B cell (primary cell): ENCODE measurements at regions of chr2 and their contacts with region 1.

Region 1: GRCh38 chr2:231394211-231395141 is 1.0 kb upstream of the B3GNT7 start:
- DNase-seq: peak; percentile 88
- ATAC-seq: peak; percentile 40
- H3K4me3 ChIP-seq: peak overlapping the region; percentile 48 to 85 (median 66)
- H3K4me3 Mint-ChIP-seq: peak overlapping the region; percentile 99
- H3K27ac ChIP-seq: peak overlapping the region; percentile 97
- H3K27ac Mint-ChIP-seq: peak overlapping the region; percentile 100
- H3K4me1 ChIP-seq: peaks cover 47 to 65% of the 10 kb centered on the region in 2 donors
- H3K4me1 Mint-ChIP-seq: peaks cover 64% of the 10 kb centered on the region
- H3K27me3 ChIP-seq: no peaks in the 10 kb centered on the region
- H3K27me3 Mint-ChIP-seq: no peaks in the 10 kb centered on the region
- CTCF ChIP-seq: peak; percentile 60

Region 2: DNA sequence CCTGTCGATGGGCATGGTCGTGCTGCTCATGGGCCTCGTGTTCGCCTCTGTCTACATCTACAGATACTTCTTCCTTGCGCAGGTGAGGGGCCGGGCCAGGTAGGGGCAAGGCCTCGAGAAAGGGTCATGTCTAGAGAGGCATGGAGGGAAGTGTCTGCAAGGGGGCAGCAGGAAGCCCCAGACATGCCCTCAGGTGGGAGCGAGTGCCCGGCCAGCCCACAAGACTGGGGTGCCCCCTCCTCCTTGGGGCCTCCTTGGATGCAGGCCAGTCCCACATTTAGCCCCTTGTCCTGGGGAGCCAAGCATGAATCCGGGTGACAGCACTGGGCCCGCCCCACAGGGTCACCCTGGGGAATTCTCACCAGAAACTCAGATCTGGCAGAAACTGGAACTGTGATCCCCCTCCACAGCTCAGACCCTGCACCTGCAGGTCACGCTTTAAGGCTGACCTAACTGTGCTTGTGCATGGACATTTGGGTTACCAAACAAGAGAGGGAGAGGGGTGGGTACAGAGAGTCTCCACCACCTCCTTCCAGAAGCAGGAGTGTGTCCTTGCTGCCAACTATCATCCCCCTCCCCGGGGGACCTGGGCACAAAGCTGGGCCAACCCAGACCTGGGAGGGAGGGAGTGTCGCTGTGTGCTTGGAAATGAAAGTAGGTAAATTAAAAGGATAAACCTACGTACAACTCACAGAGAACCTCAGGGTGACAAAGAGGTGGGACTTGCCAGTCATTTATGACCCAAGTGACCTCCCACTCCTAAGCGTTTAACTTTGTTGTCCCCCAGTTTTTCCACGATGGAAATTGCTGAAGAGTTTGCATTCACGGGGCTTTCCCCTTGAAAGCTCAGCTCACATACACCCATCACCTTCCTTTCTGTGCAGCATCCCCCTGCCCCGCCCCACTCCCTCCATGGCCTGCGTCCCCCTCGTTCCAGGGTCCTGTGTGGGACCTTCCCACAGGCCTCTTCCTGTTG is 520.7 kb before region 1 on chr2:
- CTCF ChIA-PET with region 1: no interaction called
- POLR2A ChIA-PET with region 1: no interaction called
- intact Hi-C with region 1: loop called (anchors 10 kb)
- DNase-seq: peak; percentile 88
- ATAC-seq: peak; percentile 77
- H3K4me3 ChIP-seq: peak overlapping the region in 4 of 5 experiments; percentile 33 to 57 (median 40)
- H3K4me3 Mint-ChIP-seq: peak overlapping the region; percentile 80
- H3K27ac ChIP-seq: peak overlapping the region; percentile 90 to 99
- H3K27ac Mint-ChIP-seq: peak overlapping the region; percentile 87
- H3K4me1 ChIP-seq: peaks cover 92 to 95% of the 10 kb centered on the region in 2 donors
- H3K4me1 Mint-ChIP-seq: peaks cover 72% of the 10 kb centered on the region
- H3K27me3 ChIP-seq: no peaks in the 10 kb centered on the region
- H3K27me3 Mint-ChIP-seq: no peaks in the 10 kb centered on the region
- CTCF ChIP-seq: no peak

Region 3: GRCh38 chr2:231245253-231246094 is 149.0 kb before region 1 on chr2:
- CTCF ChIA-PET with region 1: interaction called, 13 read pairs
- POLR2A ChIA-PET with region 1: no interaction called
- intact Hi-C with region 1: no loop called
- DNase-seq: peak; percentile 61
- ATAC-seq: peak; percentile 68
- H3K4me3 ChIP-seq: no peak overlapping the region
- H3K4me3 Mint-ChIP-seq: no peak overlapping the region
- H3K27ac ChIP-seq: no peak overlapping the region
- H3K27ac Mint-ChIP-seq: no peak overlapping the region
- H3K4me1 ChIP-seq: no peaks in the 10 kb centered on the region
- H3K4me1 Mint-ChIP-seq: no peaks in the 10 kb centered on the region
- H3K27me3 ChIP-seq: no peaks in the 10 kb centered on the region
- H3K27me3 Mint-ChIP-seq: no peaks in the 10 kb centered on the region
- CTCF ChIP-seq: peak; percentile 54

Region 4: GRCh38 chr2:231312066-231312465 is 82.4 kb before region 1 on chr2:
- CTCF ChIA-PET with region 1: interaction called, 10 read pairs
- POLR2A ChIA-PET with region 1: no interaction called
- intact Hi-C with region 1: no loop called
- DNase-seq: no peak
- ATAC-seq: no peak
- H3K4me3 ChIP-seq: no peak overlapping the region
- H3K4me3 Mint-ChIP-seq: no peak overlapping the region
- H3K27ac ChIP-seq: peak overlapping the region in 1 of 2 donors; percentile 16
- H3K27ac Mint-ChIP-seq: no peak overlapping the region
- H3K4me1 ChIP-seq: peaks cover 31 to 42% of the 10 kb centered on the region in 2 donors
- H3K4me1 Mint-ChIP-seq: peaks cover 48% of the 10 kb centered on the region
- H3K27me3 ChIP-seq: no peaks in the 10 kb centered on the region
- H3K27me3 Mint-ChIP-seq: no peaks in the 10 kb centered on the region
- CTCF ChIP-seq: no peak

Region 5: DNA sequence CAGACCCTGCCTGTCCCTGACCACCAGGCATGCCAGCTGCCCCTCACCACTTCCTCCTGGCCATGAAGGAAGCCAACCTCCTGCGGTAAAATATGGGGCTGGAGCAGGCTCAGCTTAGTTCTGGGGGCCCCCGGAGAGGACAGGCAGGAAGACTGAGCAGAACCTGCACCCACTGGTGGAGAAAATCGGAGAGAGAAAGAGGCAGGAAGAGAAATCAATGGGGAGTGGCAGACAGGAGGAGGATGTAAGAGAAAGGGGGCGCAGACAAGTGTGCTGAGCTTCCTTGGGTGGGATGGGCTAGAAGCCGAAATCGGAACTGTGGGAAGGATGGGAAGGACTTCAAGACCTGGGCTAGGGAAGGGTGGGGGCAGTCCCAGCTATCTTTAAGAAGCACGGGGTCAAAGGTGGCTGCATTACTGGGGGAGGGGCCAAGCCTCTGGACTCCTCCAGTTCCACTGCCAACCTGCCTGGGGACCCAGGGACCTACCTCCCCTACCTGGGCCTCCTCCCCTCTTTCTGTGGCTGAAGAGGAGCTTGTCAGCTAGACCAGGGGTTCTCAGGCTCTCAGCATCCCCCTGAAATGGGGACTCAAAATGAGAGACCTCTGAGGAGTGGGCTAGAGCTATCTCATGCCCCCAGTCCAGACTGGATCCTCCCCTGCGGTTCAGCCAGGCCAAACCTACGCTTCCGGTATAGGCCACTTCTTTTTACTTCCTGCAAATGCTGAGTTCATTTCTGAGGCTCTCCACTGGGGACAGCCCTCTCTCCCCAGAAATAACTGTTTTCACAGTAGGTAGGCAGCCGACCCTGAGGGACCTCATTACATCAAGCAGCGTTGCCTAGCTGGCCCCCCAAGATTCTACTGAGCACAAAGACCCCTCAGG is 32.6 kb before region 1 on chr2:
- CTCF ChIA-PET with region 1: interaction called, 3 read pairs
- POLR2A ChIA-PET with region 1: interaction called, 9 read pairs
- intact Hi-C with region 1: loop called (anchors 1 kb)
- DNase-seq: peak; percentile 61
- ATAC-seq: peak; percentile 87
- H3K4me3 ChIP-seq: no peak overlapping the region
- H3K4me3 Mint-ChIP-seq: peak overlapping the region; percentile 32
- H3K27ac ChIP-seq: peak overlapping the region in 1 of 2 donors; percentile 38
- H3K27ac Mint-ChIP-seq: peak overlapping the region; percentile 69
- H3K4me1 ChIP-seq: peaks cover 17 to 23% of the 10 kb centered on the region in 2 donors
- H3K4me1 Mint-ChIP-seq: peaks cover 25% of the 10 kb centered on the region
- H3K27me3 ChIP-seq: no peaks in the 10 kb centered on the region
- H3K27me3 Mint-ChIP-seq: no peaks in the 10 kb centered on the region
- CTCF ChIP-seq: peak; percentile 23

Region 6: DNA sequence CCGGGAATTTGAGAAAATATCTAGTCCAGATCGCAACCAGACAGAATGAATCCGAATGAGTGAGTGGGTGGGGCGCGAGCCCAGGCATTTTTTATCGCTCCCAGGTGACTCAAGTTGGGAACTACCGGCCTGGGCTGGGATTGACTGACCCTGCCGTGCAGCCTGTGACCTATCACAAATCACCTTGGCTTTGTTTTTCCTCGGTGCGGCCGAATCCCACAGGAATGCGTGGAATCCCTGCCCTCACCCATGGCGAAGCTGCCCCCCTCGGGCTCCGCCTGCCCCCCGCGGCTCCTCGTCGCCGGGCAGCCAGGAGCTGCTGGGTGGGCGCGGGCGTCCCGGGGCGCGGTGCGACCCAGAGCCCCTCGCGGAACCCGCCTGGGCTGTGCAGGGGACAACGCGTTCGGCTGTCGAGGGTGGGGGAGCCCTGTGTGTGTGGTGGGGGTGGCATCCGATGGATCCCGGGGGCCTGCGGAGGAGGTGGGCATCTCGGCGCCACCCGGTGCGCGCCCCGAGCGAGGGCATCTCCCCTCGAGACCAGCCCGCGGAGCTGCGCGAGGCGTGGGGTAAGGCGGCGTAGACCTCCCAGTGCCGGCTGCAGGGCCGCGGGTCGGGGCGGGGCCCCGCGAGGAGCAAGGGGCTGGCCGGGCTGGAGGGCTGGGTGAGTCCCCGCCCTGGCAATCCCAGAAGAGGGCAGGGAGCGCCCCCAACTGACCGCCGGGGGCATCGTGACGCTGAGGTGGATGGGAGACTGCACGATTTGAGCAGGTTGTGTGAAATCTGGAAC is 17.5 kb after region 1 on chr2:
- CTCF ChIA-PET with region 1: interaction called, 57 read pairs
- POLR2A ChIA-PET with region 1: interaction called, 3 read pairs
- intact Hi-C with region 1: no loop called
- DNase-seq: peak; percentile 88
- ATAC-seq: peak; percentile 100
- H3K4me3 ChIP-seq: peak overlapping the region in 4 of 5 experiments; percentile 10 to 62 (median 52)
- H3K4me3 Mint-ChIP-seq: peak overlapping the region; percentile 80
- H3K27ac ChIP-seq: no peak overlapping the region
- H3K27ac Mint-ChIP-seq: no peak overlapping the region
- H3K4me1 ChIP-seq: peaks cover 12 to 13% of the 10 kb centered on the region in 2 donors
- H3K4me1 Mint-ChIP-seq: peaks cover 7% of the 10 kb centered on the region
- H3K27me3 ChIP-seq: peaks cover 0 to 24% (median 10%) of the 10 kb centered on the region in 4 experiments
- H3K27me3 Mint-ChIP-seq: peaks cover 21% of the 10 kb centered on the region
- CTCF ChIP-seq: peak; percentile 87

Region 7: GRCh38 chr2:231612179-231613053 is 217.9 kb after region 1 on chr2:
- CTCF ChIA-PET with region 1: no interaction called
- POLR2A ChIA-PET with region 1: no interaction called
- intact Hi-C with region 1: loop called (anchors 5 kb)
- DNase-seq: peak; percentile 93
- ATAC-seq: peak; percentile 39
- H3K4me3 ChIP-seq: peak overlapping the region in 4 of 5 experiments; percentile 9 to 68 (median 50)
- H3K4me3 Mint-ChIP-seq: peak overlapping the region; percentile 86
- H3K27ac ChIP-seq: peak overlapping the region; percentile 90 to 96
- H3K27ac Mint-ChIP-seq: peak overlapping the region; percentile 96
- H3K4me1 ChIP-seq: peaks cover 21 to 34% of the 10 kb centered on the region in 2 donors
- H3K4me1 Mint-ChIP-seq: peaks cover 42% of the 10 kb centered on the region
- H3K27me3 ChIP-seq: no peaks in the 10 kb centered on the region
- H3K27me3 Mint-ChIP-seq: no peaks in the 10 kb centered on the region
- CTCF ChIP-seq: peak; percentile 87